Breast epithelium (tissue), 4 donors: ENCODE measurements at regions of chr1 and their contacts with region 1.

Region 1: DNA sequence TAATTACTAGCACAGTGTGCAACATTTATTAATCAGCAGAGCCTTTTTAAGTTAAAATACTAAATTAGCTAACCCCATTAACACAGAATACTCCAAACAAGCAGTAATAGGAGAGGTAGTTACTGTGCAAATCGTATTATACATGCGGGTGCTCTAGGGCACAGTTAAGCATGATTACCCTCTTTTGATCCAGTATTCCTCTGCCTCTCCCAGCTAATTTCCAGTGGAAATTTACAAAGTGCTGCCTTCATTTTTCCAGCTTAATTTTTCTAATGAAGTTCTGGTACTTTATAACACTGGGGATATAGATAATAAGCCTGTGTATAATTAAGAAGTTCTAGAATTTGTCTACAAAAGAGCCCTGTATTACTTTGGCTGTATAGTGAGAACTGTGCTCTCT is 159.9 kb downstream of the SPATA17 start:
- DNase-seq: no peak
- H3K4me3 ChIP-seq: no peak overlapping the region
- H3K27ac ChIP-seq: no peak overlapping the region
- H3K4me1 ChIP-seq: no peaks in the 10 kb centered on the region
- H3K27me3 ChIP-seq: no peaks in the 10 kb centered on the region
- CTCF ChIP-seq: no peak
- POLR2A ChIP-seq: no peak

Region 2: GRCh38 chr1:217839161-217839560 is 48.1 kb after region 1 on chr1:
- intact Hi-C with region 1: loop called (anchors 2 kb)
- DNase-seq: no peak
- H3K4me3 ChIP-seq: no peak overlapping the region
- H3K27ac ChIP-seq: no peak overlapping the region
- H3K4me1 ChIP-seq: no peaks in the 10 kb centered on the region
- H3K27me3 ChIP-seq: no peaks in the 10 kb centered on the region
- CTCF ChIP-seq: no peak
- POLR2A ChIP-seq: no peak